OCI-LY7 (cell line): ENCODE measurements at regions of chr10 and their contacts with region 1.

Region 1: GRCh38 chr10:98467506-98468346 is 21.0 kb upstream of the HPS1 start:
- DNase-seq: peak; percentile 86
- H3K4me3 ChIP-seq: peak overlapping the region; percentile 61
- H3K27ac ChIP-seq: no peak overlapping the region
- H3K4me1 ChIP-seq: peaks cover 3% of the 10 kb centered on the region
- CTCF ChIP-seq: peak; percentile 85

Region 2: DNA sequence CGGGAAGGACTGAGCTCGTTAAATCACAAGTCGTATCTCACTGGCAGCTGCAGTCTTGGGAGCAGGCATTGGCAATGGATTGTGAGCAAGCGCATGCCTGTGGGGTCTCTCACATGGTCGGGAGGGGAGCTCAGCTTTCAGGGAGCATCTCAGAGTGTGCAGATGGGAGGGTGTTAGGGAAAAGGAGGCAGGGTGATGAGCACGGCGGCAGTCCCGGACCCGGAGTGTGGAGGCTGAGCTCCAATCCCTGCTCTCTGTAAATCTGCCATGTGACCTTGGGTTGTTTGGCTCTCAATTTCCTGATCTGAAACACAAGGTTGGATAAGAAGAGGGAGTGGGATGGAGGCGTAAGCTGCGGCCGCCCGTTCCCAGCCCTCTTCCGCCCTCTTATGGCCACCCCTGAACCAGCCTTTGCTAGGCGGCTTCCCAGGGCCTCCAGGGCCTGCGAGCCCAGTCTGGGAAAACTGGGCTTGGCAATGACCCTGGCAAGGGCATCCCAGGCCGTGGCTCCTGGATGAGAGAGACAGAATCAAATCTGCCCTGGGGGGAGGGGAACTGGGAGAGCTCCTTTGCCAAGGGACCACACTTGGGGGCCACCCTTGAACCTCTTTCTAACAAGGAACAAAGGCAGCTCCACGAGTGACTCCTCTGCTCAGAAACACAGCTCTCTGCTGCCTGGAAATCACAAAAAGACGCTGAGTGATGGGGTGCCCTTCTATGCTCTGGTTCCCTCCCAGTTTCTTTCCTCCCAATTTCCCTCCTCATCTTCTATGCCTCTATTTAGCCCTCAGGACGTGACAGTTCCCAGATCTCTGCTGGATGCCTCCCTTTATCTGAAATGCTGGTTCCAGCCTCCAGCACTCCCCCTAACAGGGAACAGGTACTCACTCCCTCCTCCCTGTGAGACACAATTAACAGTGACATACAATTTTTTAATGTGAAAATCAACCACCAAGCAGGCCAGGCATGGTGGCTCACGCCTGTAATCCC is 158.1 kb before region 1 on chr10:
- CTCF ChIA-PET with region 1: no interaction called
- POLR2A ChIA-PET with region 1: no interaction called
- intact Hi-C with region 1: no loop called
- DNase-seq: peak; percentile 10
- H3K4me3 ChIP-seq: no peak overlapping the region
- H3K27ac ChIP-seq: no peak overlapping the region
- H3K4me1 ChIP-seq: no peaks in the 10 kb centered on the region
- CTCF ChIP-seq: peak; percentile 60

Region 3: DNA sequence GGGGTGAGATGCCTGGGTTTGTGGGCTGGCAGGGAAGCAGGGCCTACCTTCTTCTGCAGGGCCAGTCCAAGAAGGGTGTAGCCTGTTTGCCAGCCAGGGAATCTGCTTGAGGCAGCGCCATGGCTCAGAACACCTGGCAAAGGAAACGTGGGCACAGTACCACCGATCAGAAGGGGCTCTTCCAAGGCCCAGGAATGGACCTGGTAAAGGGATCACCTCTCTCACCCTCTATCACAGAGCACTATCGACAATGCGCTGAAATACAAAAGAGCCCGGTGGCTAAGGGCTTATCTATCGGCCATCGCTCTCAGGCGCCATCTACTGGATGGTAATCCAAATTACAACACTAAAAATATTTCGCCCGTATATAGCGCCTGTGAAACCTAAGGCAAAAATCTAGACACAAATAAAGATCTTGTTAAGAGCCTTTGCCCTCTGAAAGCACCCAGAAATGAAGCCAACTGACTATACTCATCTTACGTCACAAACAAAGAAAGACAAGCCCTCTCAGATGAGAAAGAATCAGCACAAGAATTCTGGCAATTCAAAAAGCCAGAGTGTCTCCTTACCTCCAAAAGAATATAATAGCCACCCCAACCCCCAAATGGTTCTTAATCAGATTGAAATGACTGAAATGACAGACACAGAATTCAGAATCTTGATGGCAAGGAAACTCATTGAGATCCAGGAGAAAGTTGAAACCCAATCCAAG is 196.8 kb after region 1 on chr10:
- CTCF ChIA-PET with region 1: no interaction called
- POLR2A ChIA-PET with region 1: no interaction called
- intact Hi-C with region 1: loop called (anchors 1 kb)
- DNase-seq: peak; percentile 52
- H3K4me3 ChIP-seq: no peak overlapping the region
- H3K27ac ChIP-seq: no peak overlapping the region
- H3K4me1 ChIP-seq: no peaks in the 10 kb centered on the region
- CTCF ChIP-seq: peak; percentile 88

Region 4: GRCh38 chr10:99042051-99042771 is 574.5 kb after region 1 on chr10:
- CTCF ChIA-PET with region 1: no interaction called
- POLR2A ChIA-PET with region 1: no interaction called
- intact Hi-C with region 1: loop called (anchors 2 kb)
- DNase-seq: no peak
- H3K4me3 ChIP-seq: no peak overlapping the region
- H3K27ac ChIP-seq: no peak overlapping the region
- H3K4me1 ChIP-seq: no peaks in the 10 kb centered on the region
- CTCF ChIP-seq: no peak

Region 5: GRCh38 chr10:99248824-99249223 is 781.1 kb after region 1 on chr10:
- CTCF ChIA-PET with region 1: no interaction called
- POLR2A ChIA-PET with region 1: no interaction called
- intact Hi-C with region 1: loop called (anchors 2 kb)
- DNase-seq: no peak
- H3K4me3 ChIP-seq: no peak overlapping the region
- H3K27ac ChIP-seq: no peak overlapping the region
- H3K4me1 ChIP-seq: no peaks in the 10 kb centered on the region
- CTCF ChIP-seq: no peak

Region 6: GRCh38 chr10:99560277-99561126 is 1092.8 kb after region 1 on chr10:
- CTCF ChIA-PET with region 1: no interaction called
- POLR2A ChIA-PET with region 1: no interaction called
- intact Hi-C with region 1: no loop called
- DNase-seq: peak; percentile 58
- H3K4me3 ChIP-seq: no peak overlapping the region
- H3K27ac ChIP-seq: no peak overlapping the region
- H3K4me1 ChIP-seq: peaks cover 21% of the 10 kb centered on the region
- CTCF ChIP-seq: peak; percentile 96